PC-3 (cell line): ENCODE measurements at regions of chr20 and their contacts with region 1.

Region 1: DNA sequence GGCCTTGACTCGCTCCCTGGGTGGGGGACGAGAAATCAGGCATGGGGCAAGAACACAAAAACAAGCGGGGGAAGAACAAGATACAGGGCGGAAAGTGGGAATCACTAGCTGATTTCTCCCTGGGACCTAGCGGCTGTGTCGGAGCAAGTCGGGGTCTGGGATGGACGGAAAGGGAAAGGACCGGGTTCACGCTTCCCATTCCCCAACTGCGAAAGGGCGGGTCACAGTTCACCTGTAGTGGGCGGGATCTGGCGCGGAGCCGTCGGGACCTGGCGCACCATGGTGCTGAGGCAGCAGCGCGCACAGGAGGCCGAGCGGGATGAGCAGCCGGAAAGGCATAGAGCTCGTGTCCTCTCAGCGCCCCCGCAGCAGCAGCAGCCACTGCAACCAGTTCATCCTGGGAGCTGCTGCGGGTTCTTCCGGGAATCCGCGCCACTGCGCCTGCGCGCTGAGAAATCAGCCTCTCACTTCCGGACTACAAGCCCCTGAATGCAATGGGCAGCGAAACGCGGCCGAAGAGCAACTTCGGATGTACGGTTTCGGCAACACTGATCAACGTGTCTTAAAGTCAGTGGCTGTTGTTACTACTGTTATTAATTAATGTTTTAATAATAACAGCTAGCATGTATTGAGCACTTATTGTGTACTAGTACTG is at the start of gene EDEM2:
- DNase-seq: peak; percentile 96
- ATAC-seq: peak; percentile 90
- H3K4me3 ChIP-seq: peak within 1 kb of the TSS; percentile 95
- H3K27ac ChIP-seq: peak within 1 kb of the TSS; percentile 51
- H3K4me1 ChIP-seq: peaks cover 10% of the 10 kb centered on the region
- H3K27me3 ChIP-seq: no peaks in the 10 kb centered on the region
- CTCF ChIP-seq: no peak
- total RNA-seq, gene EDEM2: 22.2 and 28.5 TPM in 2 replicates

Region 2: DNA sequence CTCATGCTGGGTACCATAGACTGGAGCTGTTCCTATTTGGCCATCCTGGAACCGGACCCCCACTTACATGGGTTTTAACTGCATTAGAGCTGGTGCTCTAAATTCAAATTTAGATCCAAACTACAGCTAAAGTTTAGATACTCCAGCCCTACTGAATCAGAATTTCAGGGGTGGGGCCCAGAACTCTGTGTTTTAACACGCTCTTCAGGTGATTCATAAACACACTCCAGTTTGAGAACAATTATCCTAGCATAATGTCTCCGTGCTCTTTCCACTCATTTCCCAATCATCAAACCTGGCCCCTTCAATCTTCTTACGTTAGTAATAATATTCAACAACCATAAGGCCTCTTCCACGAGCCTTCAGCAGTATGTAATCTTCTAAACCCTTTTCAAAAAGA is 69.7 kb before region 1 on chr20:
- CTCF ChIA-PET with region 1: no interaction called
- POLR2A ChIA-PET with region 1: no interaction called
- intact Hi-C with region 1: no loop called
- DNase-seq: no peak
- ATAC-seq: no peak
- H3K4me3 ChIP-seq: no peak overlapping the region
- H3K27ac ChIP-seq: no peak overlapping the region
- H3K4me1 ChIP-seq: no peaks in the 10 kb centered on the region
- H3K27me3 ChIP-seq: no peaks in the 10 kb centered on the region
- CTCF ChIP-seq: no peak

Region 3: DNA sequence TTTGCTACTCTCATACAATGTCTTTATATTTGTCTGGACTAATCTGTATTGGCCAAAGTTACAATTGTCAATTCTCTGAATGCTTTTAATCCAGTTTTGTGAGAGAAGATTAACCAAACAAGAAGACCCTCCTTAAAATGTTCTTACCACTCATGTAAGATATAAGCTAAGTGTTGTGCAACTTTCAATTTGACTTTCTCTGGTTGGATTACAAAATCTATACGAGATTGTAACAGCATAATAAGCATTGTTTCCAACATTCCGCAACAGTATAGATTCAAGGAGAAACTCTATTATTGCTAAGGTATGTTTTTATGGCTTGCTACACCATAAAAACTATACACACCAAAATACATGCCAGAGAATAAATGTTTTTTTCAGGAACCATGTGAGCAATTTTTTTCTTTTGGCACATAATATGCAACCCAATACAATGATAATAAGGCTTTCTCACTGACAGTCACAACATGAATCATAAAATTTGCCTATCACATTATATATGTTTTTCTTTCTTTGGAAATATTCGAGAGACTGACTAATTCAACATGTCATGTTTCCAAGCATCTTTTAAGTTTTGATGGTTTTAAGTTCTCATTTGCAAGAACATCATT is 42.3 kb before region 1 on chr20:
- CTCF ChIA-PET with region 1: no interaction called
- POLR2A ChIA-PET with region 1: no interaction called
- intact Hi-C with region 1: no loop called
- DNase-seq: no peak
- ATAC-seq: no peak
- H3K4me3 ChIP-seq: no peak overlapping the region
- H3K27ac ChIP-seq: no peak overlapping the region
- H3K4me1 ChIP-seq: peaks cover 4% of the 10 kb centered on the region
- H3K27me3 ChIP-seq: no peaks in the 10 kb centered on the region
- CTCF ChIP-seq: no peak

Region 4: GRCh38 chr20:35166242-35166830 is 19.3 kb after region 1 on chr20:
- CTCF ChIA-PET with region 1: interaction called, 10 read pairs
- POLR2A ChIA-PET with region 1: no interaction called
- intact Hi-C with region 1: loop called (anchors 1 kb)
- DNase-seq: no peak
- ATAC-seq: no peak
- H3K4me3 ChIP-seq: no peak overlapping the region
- H3K27ac ChIP-seq: no peak overlapping the region
- H3K4me1 ChIP-seq: peaks cover 5% of the 10 kb centered on the region
- H3K27me3 ChIP-seq: no peaks in the 10 kb centered on the region
- CTCF ChIP-seq: no peak

Region 5: DNA sequence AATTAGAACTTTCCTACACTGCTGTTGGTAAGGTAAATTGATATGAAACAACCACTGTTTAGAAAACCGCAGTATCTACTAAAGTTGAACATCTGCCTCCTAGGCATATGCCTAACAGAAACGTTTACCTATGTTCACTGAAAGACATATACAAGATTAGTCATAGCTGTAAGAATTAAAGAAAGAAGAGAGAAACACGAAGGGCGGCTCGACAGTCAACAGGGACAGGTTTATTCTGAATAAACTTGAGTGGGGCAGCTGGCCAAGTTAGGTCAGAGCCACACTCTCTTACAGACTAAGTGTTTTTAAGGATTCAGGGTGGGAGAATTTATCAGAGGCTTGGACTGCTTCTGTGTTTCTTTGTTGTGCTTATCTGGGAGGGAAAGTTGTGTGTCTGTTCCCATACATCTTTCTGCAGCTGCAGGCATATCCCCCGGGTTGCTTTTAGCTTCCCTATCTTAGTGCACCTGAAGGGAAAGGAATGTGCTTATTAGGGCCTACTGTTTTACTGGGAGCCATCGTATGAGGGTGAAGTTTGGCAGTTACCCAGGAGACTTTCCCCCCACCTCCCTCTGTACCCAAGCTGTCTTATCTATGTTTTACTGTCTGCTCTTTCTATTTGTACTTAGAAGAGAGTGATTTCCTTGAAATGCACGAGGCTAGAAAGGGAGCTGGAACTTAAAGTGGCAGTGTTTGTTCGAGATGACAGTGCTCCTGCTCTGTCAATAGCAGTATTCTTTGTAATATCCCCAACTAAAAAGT is 45.2 kb after region 1 on chr20:
- CTCF ChIA-PET with region 1: interaction called, 5 read pairs
- POLR2A ChIA-PET with region 1: no interaction called
- intact Hi-C with region 1: loop called (anchors 1 kb)
- DNase-seq: peak; percentile 88
- ATAC-seq: peak; percentile 94
- H3K4me3 ChIP-seq: no peak overlapping the region
- H3K27ac ChIP-seq: 0 out of 2 replicates have a peak overlapping the region, but pooled peaks have one; percentile 18
- H3K4me1 ChIP-seq: peaks cover 27% of the 10 kb centered on the region
- H3K27me3 ChIP-seq: no peaks in the 10 kb centered on the region
- CTCF ChIP-seq: no peak

Region 6: DNA sequence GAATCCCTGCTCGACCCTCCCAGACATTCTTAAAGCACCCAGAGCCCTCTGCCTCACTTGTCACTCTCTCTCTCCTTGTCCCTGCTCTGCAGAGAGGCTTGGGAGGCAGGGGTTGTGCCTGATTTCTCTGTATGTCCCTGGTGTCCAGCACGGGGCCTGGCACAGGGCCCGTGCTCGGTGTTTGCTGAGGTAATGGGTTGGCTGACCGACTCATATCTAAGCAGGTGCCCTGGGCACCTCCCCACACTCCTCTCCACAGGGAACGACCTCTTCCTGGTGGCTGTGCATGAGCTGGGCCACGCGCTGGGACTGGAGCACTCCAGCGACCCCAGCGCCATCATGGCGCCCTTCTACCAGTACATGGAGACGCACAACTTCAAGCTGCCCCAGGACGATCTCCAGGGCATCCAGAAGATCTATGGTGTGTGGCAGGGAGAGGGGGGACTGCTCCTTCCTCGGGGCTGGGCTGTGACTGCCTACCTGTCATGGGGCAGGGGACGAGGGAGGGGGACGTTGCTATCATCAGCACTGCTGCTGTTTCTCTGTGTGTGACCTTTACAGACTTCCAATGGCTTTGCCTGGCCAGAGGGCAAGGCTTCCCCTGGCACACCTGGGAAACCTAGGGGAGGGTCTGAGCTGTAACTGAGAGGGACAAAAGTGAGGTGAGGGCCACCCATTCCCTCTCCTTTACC is 116.6 kb after region 1 on chr20:
- CTCF ChIA-PET with region 1: interaction called, 26 read pairs
- POLR2A ChIA-PET with region 1: no interaction called
- intact Hi-C with region 1: no loop called
- DNase-seq: peak; percentile 49
- ATAC-seq: peak; percentile 61
- H3K4me3 ChIP-seq: peak overlapping the region; percentile 26; the same call in 1 of the 2 replicates
- H3K27ac ChIP-seq: peak overlapping the region; percentile 32
- H3K4me1 ChIP-seq: peaks cover 19% of the 10 kb centered on the region
- H3K27me3 ChIP-seq: no peaks in the 10 kb centered on the region
- CTCF ChIP-seq: no peak

Region 7: GRCh38 chr20:35447082-35447789 is 300.2 kb after region 1 on chr20:
- CTCF ChIA-PET with region 1: no interaction called
- POLR2A ChIA-PET with region 1: no interaction called
- intact Hi-C with region 1: loop called (anchors 5 kb)
- DNase-seq: peak; percentile 96
- ATAC-seq: peak; percentile 94
- H3K4me3 ChIP-seq: peak overlapping the region; percentile 62; the same call in 1 of the 2 replicates
- H3K27ac ChIP-seq: no peak overlapping the region
- H3K4me1 ChIP-seq: no peaks in the 10 kb centered on the region; the same call in 1 of the 2 replicates
- H3K27me3 ChIP-seq: no peaks in the 10 kb centered on the region
- CTCF ChIP-seq: peak; percentile 88